CD8-positive, alpha-beta memory T cell (primary cell): ENCODE measurements at regions of chr5 and their contacts with region 1.

Region 1: DNA sequence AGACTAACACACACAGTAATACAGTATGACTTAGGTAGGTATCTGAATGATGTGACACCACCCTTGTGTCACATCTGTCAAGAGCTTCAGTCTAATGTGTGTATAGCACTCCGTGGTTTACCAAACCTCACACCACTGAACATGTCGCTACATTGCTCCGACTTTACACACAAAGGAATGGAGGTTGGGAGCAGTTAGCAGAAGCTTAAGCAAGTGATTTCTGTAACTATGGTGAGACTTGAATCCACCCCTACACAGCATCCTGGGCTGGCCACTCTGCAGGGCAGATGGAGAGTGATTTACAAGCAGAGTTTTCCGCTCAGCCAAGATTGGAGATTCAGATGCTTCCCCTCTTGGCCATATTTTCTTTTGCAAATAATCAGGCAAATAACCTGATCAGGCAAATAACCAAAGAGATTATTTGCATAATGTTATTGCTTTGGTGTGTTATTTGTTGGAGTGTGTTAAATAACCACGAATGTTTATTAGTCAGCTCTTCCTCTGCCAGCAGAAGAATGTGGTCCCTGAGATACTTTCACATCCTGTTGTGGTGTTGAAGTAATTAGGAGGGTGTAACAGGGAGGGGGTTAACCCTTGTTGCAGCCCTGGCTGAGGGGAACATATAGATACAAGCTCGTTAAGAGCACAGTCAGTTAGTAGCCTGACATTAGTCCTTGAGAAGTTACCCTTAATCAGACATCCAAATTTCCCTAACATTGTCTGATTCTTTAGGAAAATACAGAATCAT is 92.8 kb downstream of the SNX18 start:
- DNase-seq: peak; percentile 2 to 71 (median 15)
- H3K4me3 ChIP-seq: peak overlapping the region; percentile 26
- H3K4me3 Mint-ChIP-seq: peak overlapping the region; percentile 28 to 88 (median 74)
- H3K27ac ChIP-seq: no peak overlapping the region
- H3K27ac Mint-ChIP-seq: peak overlapping the region in 7 of 8 donors; percentile 62 to 89 (median 86)
- H3K4me1 ChIP-seq: peaks cover 22% of the 10 kb centered on the region
- H3K4me1 Mint-ChIP-seq: peaks cover 35 to 61% (median 58%) of the 10 kb centered on the region in 3 donors
- H3K27me3 ChIP-seq: no peaks in the 10 kb centered on the region
- H3K27me3 Mint-ChIP-seq: no peaks in the 10 kb centered on the region

Region 2: GRCh38 chr5:54637654-54638053 is 27.3 kb after region 1 on chr5:
- CTCF ChIA-PET with region 1: interaction called, 4 read pairs
- POLR2A ChIA-PET with region 1: interaction called, 14 read pairs
- DNase-seq: no peak
- H3K4me3 ChIP-seq: peak overlapping the region; percentile 21
- H3K4me3 Mint-ChIP-seq: peak overlapping the region in 5 of 7 donors; percentile 7 to 45 (median 37)
- H3K27ac ChIP-seq: no peak overlapping the region
- H3K27ac Mint-ChIP-seq: peak overlapping the region in 5 of 8 donors; percentile 5 to 72 (median 28)
- H3K4me1 ChIP-seq: peaks cover 19% of the 10 kb centered on the region
- H3K4me1 Mint-ChIP-seq: peaks cover 23 to 34% (median 32%) of the 10 kb centered on the region in 3 donors
- H3K27me3 ChIP-seq: no peaks in the 10 kb centered on the region
- H3K27me3 Mint-ChIP-seq: no peaks in the 10 kb centered on the region

Region 3: DNA sequence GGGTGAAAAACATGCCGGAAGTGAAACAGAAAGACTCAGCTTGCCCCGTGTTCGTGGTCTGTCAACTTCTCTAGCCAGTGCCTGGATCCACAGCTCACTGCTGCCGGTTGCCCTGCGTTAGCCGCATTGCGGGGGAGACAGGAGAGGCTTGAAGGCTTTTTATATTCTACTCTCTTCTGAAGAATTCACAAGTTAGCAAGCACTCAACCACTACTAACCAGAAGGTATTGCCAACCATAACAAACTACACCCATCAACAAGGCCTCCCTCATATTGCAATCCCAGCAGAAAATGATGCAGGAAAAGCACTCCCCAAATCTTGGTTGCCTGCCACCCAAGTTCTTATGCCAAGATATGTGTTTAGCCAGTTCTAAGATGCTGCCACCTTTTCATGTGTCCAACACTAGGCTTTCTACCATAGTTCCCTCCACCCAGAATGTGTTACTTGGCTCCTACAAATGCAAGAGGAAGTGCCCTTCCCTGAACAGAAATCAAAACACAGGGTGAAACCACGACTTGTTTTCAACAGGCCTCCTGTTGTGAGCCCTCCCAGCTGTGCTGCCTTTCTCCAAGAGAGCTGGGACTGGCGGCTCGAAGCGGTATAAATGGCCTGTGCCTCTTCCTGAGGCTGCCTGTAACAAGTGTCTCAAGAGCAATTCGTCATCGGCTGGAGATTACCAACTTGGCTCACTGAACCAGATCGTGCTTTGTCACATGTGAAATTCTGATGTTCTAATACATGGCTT is 36.2 kb after region 1 on chr5:
- CTCF ChIA-PET with region 1: no interaction called
- POLR2A ChIA-PET with region 1: interaction called, 10 read pairs
- DNase-seq: peak; percentile 42 to 82 (median 65)
- H3K4me3 ChIP-seq: peak overlapping the region; percentile 37
- H3K4me3 Mint-ChIP-seq: peak overlapping the region; percentile 46 to 81 (median 72)
- H3K27ac ChIP-seq: peak overlapping the region; percentile 14
- H3K27ac Mint-ChIP-seq: peak overlapping the region; percentile 80 to 98 (median 90)
- H3K4me1 ChIP-seq: peaks cover 54% of the 10 kb centered on the region
- H3K4me1 Mint-ChIP-seq: peaks cover 56 to 70% (median 59%) of the 10 kb centered on the region in 3 donors
- H3K27me3 ChIP-seq: no peaks in the 10 kb centered on the region
- H3K27me3 Mint-ChIP-seq: no peaks in the 10 kb centered on the region

Region 4: DNA sequence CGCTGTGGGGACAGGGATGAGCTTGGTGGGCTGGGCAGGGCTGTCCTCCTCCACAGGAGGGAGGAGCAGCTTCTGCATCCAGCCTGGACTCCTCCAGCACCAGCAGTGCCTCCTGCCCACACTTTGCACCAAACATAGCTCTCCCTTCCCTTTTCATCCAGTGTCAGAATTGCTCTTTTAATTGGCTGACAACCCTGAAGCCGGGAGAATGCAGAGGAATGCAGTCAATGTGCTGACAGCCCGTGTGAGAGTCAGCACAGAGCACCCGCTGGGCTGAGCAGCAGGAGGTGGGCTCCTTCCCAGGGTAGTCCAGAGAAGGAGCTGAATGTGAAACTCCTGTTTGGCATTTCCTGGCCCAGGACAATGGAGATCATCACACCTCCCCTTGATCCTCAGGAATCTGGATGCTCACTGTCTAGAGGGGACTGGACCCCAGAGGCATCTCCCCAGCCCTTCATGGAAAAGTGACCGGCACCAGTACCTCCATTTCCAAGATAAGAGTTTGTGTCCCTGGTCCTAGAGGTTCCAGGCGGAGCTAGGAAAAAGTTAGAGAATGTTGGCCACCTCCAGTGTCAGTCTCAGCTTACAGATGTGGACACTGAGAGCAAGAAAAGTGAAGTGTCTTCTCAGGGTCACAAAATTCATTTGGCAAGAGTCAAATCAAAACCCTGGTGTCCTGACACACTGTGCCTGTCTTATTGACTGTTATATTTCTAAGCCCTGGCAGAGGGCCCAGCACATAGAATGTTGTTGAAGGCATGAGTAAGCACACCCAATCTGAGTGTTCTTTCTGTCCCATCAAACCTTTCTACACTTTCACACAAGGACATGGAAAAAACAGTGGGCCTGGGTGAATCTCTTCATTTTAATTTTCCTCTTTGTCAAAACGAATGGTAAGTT is 109.3 kb after region 1 on chr5:
- CTCF ChIA-PET with region 1: no interaction called
- POLR2A ChIA-PET with region 1: no interaction called
- DNase-seq: no peak
- H3K4me3 ChIP-seq: no peak overlapping the region
- H3K4me3 Mint-ChIP-seq: no peak overlapping the region
- H3K27ac ChIP-seq: no peak overlapping the region
- H3K27ac Mint-ChIP-seq: peak overlapping the region in 2 of 8 donors; percentile 24 to 36
- H3K4me1 ChIP-seq: no peaks in the 10 kb centered on the region
- H3K4me1 Mint-ChIP-seq: peaks cover 21 to 29% (median 21%) of the 10 kb centered on the region in 3 donors
- H3K27me3 ChIP-seq: no peaks in the 10 kb centered on the region
- H3K27me3 Mint-ChIP-seq: peaks cover 0 to under 1% of the 10 kb centered on the region in 2 donors